HEK293 (cell line): ENCODE measurements at regions of chr15 and their contacts with region 1.

Region 1: DNA sequence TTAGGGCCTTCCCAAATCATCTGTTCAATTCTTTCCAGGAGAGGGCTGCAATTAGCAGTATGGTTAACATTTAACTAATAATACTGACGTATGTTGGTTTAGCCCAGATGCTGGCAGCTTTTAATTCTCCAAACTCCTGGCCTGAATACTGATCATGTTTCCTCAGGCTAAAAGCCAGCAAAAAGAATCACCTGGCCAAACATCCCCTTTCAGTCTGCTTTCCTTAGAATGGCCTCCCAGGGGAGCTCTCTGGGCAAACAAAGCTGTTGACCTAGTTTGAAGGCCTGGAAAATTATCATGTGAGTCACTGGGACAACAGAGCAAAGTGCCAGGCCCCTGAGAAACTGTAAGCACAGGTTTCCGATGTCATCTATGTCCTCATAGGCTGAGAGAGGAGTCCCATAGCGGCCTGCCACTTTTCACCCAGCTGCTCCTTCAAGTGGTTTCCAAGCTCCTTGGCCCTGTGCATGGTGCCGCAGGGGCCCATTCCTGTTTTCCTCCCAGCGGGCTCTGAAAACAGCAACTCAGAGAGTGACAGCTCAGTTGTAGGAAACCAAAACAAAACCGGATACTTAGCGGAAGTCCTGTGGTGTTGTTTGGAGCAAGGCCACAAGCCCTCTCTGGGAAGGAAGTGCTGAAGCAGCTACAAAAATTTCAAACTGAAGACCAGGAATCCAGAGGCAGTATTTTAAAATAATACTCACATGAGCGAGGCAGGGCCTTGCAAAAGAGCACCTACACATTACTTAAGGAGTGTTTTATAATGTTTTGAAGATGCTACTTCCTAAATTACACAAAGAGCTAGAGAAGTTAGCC is 36.5 kb upstream of the RAB11A start:
- H3K4me3 ChIP-seq: no peak overlapping the region
- H3K27ac ChIP-seq: peak overlapping the region; percentile 79
- H3K4me1 ChIP-seq: peaks cover 15% of the 10 kb centered on the region
- CTCF ChIP-seq: 0 out of 2 replicates have a peak, but pooled peaks have one; percentile 31

Region 2: DNA sequence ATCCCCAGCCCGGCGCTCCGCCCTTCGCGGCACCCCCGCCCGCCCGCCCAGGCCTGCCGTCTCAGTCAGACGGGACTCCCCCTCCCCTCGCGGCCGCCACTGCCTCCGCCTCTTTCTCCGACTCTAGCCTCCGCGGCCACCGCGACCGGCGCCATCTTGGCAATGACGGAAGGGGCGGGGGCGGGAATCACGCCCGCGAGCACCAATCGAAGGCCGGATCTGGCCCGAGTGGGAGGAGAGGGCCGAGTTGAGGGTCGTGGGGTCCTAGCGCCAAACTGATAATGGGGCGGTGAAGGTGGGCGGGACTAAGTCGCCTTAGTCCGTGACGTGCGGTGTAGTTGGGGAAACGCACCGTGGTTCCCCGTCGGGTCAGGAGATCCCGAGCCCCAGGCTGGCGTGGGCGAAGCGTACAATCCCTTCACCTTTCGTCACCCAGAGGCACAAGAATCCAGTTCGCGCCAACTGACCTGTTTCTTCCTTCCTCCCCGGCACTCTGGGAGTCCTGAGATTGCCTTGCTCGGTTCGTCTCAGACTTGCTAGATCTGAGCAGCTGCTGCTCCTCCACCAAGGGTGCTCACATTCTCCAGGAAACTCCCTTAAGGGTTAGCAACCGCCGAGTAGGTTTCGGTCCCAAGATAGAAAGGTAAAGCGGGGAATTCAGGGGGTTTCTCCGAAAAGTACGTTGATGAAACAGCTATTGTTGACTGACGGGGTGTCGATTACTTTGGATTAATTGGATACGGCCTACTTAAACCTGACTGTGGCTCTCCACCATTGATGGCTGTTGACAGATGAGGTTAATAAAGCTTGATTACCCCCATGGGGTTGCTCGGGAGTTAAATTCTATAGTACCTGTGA is 40.4 kb before region 1 on chr15 and contains the start of gene DENND4A:
- CTCF ChIA-PET with region 1: interaction called, 5 read pairs
- POLR2A ChIA-PET with region 1: interaction called, 16 read pairs
- H3K4me3 ChIP-seq: peak within 1 kb of the TSS; percentile 70
- H3K27ac ChIP-seq: peak within 1 kb of the TSS; percentile 81
- H3K4me1 ChIP-seq: peaks cover 17% of the 10 kb centered on the region
- CTCF ChIP-seq: no peak

Region 3: GRCh38 chr15:66014635-66015182 is 182.0 kb after region 1 on chr15:
- CTCF ChIA-PET with region 1: no interaction called
- POLR2A ChIA-PET with region 1: no interaction called
- H3K4me3 ChIP-seq: no peak overlapping the region
- H3K27ac ChIP-seq: no peak overlapping the region
- H3K4me1 ChIP-seq: no peaks in the 10 kb centered on the region
- CTCF ChIP-seq: no peak

Region 4: DNA sequence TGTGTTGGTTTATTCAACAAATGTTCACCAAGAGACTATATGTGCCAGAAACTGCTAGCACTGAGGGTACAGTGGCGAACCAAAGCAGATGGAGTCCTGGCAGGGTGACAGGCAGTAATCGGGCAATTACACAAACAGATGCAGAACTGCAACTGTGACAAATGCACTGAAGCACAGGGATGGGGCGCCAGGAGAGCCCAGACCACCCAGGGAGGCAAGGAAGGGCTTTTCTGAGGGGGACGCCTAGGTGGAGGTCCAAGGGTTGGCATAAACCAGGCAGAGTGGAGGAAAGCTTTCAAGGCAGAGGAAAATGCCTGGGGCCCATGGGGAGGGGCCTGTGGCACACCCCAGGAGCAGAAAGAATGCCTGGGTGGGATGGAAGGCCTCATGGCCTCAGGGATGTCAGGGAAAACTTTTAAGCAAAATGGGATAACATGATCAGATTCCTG is 466.1 kb after region 1 on chr15:
- CTCF ChIA-PET with region 1: no interaction called
- POLR2A ChIA-PET with region 1: no interaction called
- H3K4me3 ChIP-seq: no peak overlapping the region
- H3K27ac ChIP-seq: no peak overlapping the region
- H3K4me1 ChIP-seq: peaks cover 20% of the 10 kb centered on the region
- CTCF ChIP-seq: no peak